ENCODE measurements at regions of chr2 and their contacts with region 1.

Region 1: GRCh38 chr2:96913398-96914202 is 43.7 kb upstream of the SEMA4C start:
- DNase-seq: no peak
- ATAC-seq: peak; percentile 72
- H3K4me3 ChIP-seq: no peak overlapping the region
- H3K27ac ChIP-seq: peak overlapping the region; percentile 55; the same call in 2 of the 3 replicates
- H3K4me1 ChIP-seq: peaks cover 40 to 54% of the 10 kb centered on the region in 2 experiments
- H3K27me3 ChIP-seq: no peaks in the 10 kb centered on the region
- CTCF ChIP-seq: no peak
- EP300 ChIP-seq: no peak
- POLR2A ChIP-seq: no peak
- RAD21 ChIP-seq: no peak

Region 2: GRCh38 chr2:96788442-96789244 is 125.0 kb before region 1 on chr2:
- CTCF ChIA-PET with region 1: no interaction called
- POLR2A ChIA-PET with region 1: no interaction called
- in situ Hi-C with region 1: no loop called
- intact Hi-C with region 1: no loop called
- DNase-seq: no peak
- ATAC-seq: peak; percentile 39
- H3K4me3 ChIP-seq: no peak overlapping the region
- H3K27ac ChIP-seq: no peak overlapping the region
- H3K4me1 ChIP-seq: peaks cover 0 to 11% of the 10 kb centered on the region in 2 experiments; a peak in 2 of 5 replicates
- H3K27me3 ChIP-seq: no peaks in the 10 kb centered on the region
- CTCF ChIP-seq: no peak
- EP300 ChIP-seq: no peak
- POLR2A ChIP-seq: no peak
- RAD21 ChIP-seq: no peak

Region 3: GRCh38 chr2:96830044-96830562 is 83.5 kb before region 1 on chr2:
- CTCF ChIA-PET with region 1: no interaction called
- POLR2A ChIA-PET with region 1: no interaction called
- in situ Hi-C with region 1: no loop called
- intact Hi-C with region 1: no loop called
- DNase-seq: peak in 2 of 4 experiments; percentile 43 to 60
- ATAC-seq: peak; percentile 67
- H3K4me3 ChIP-seq: no peak overlapping the region
- H3K27ac ChIP-seq: 0 out of 3 replicates have a peak overlapping the region, but pooled peaks have one; percentile 17
- H3K4me1 ChIP-seq: peaks cover 9 to 11% of the 10 kb centered on the region in 2 experiments; a peak in 4 of 5 replicates
- H3K27me3 ChIP-seq: no peaks in the 10 kb centered on the region
- CTCF ChIP-seq: no peak
- EP300 ChIP-seq: no peak
- POLR2A ChIP-seq: no peak
- RAD21 ChIP-seq: no peak

Region 4: DNA sequence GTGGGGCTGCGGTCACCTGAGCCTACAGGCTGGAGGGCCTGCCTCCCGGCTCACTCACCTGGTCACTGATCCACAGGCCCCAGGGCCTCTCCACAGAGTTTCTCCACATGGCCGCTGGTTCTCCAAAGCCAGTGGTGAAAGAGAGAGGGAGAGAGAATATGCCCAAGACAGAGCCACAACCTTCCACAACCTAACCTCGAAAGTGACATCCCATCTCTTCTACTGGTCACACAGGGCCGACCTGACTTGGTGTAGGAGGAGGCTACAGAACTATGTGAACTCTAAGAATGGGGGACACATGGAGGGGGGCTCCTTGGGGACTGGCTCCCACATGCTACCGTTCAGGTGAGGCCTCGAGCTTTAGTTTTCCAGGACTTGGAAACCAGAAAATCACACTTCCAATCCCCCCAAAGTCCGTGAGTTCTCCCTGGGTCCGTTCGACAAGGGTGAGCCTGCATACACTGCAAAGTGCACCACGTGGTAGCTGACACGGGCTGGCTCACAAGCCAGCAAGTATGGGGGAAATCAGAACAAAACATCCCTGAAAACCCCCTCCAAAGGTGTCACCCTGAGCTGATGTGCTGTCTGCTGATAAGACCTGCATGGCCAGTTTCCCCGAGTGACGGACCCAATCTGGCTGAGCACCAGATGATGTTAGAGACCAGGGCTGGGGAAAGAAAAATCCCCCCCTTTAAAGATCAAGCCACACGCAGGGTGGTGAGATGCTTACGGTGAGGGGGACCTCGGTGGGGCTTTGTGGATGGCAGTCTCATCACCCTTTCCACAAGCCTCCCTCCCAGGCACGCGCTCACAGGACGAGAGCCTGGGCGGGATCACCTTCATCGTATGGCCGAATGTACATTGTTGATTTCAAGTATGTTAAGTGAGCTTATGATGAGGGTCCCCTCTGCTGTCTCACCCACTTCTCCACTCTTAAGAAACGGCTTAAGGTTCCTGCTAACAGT is 10.5 kb after region 1 on chr2:
- CTCF ChIA-PET with region 1: interaction called, 3 read pairs
- POLR2A ChIA-PET with region 1: interaction called, 13 read pairs
- in situ Hi-C with region 1: no loop called
- intact Hi-C with region 1: no loop called
- DNase-seq: peak; percentile 77 to 93 (median 84)
- ATAC-seq: peak; percentile 91
- H3K4me3 ChIP-seq: no peak overlapping the region
- H3K27ac ChIP-seq: peak overlapping the region; percentile 76
- H3K4me1 ChIP-seq: peaks cover 72 to 81% of the 10 kb centered on the region in 2 experiments
- H3K27me3 ChIP-seq: no peaks in the 10 kb centered on the region
- CTCF ChIP-seq: no peak
- EP300 ChIP-seq: peak; percentile 84
- POLR2A ChIP-seq: peak; percentile 45; the same call in 1 of the 2 replicates
- RAD21 ChIP-seq: no peak

Measured in K562 (cell line).